IMR-90 (cell line): ENCODE measurements at regions of chr3 and their contacts with region 1.

Region 1: GRCh38 chr3:195204360-195205163 is 66.4 kb downstream of the XXYLT1 start:
- DNase-seq: no peak
- ATAC-seq: peak; percentile 4; the same call in 1 of the 2 replicates
- H3K4me3 ChIP-seq: no peak overlapping the region
- H3K27ac ChIP-seq: peak overlapping the region; percentile 94
- H3K4me1 ChIP-seq: peaks cover 27% of the 10 kb centered on the region
- H3K27me3 ChIP-seq: no peaks in the 10 kb centered on the region
- CTCF ChIP-seq: no peak
- POLR2A ChIP-seq: no peak
- RAD21 ChIP-seq: no peak

Region 2: GRCh38 chr3:194497821-194498598 is 706.6 kb before region 1 on chr3:
- CTCF ChIA-PET with region 1: no interaction called
- POLR2A ChIA-PET with region 1: no interaction called
- dilution Hi-C with region 1: no loop called
- in situ Hi-C with region 1: no loop called
- intact Hi-C with region 1: no loop called
- DNase-seq: no peak
- ATAC-seq: no peak
- H3K4me3 ChIP-seq: no peak overlapping the region
- H3K27ac ChIP-seq: peak overlapping the region; percentile 23; the same call in 1 of the 2 replicates
- H3K4me1 ChIP-seq: peaks cover 18% of the 10 kb centered on the region
- H3K27me3 ChIP-seq: no peaks in the 10 kb centered on the region
- CTCF ChIP-seq: no peak
- POLR2A ChIP-seq: no peak
- RAD21 ChIP-seq: no peak

Region 3: DNA sequence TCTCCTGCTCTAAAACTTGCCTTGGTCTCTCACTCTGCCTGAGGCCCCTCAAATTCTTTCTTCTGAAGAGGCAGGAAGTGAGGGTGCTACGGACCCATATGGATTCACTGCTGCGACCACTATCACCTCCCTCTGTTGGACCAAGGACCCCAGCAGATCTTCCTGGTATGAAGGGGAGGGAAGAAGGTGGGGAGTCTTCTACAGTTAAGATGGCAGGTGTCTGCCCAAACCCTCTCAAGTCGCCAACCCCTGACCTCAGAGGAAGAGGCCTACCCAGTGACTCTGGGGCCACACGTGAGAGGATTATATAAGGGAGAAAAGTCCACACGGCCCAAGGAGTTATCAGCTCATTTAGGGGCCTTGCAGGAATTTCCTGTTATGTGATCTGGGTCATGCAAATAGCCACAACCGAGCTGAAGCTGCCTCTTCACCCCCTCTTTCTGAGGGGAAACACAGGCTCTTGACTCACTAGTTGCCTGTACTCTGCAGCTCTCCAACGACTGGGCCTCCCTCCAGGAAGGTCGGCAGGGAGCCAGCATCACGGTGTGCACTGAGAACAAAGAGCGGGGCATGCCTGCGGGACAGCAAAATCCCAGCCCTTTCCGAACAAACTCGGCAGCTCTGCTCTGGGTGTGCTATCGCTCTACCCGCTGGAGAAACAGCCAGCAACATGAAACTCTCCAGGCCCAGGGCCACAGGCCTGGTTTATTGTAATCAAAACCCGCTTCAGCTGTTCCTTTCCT is 49.6 kb before region 1 on chr3:
- CTCF ChIA-PET with region 1: no interaction called
- POLR2A ChIA-PET with region 1: no interaction called
- dilution Hi-C with region 1: no loop called
- in situ Hi-C with region 1: no loop called
- intact Hi-C with region 1: loop called (anchors 2 kb)
- DNase-seq: peak; percentile 97
- ATAC-seq: peak; percentile 73
- H3K4me3 ChIP-seq: no peak overlapping the region
- H3K27ac ChIP-seq: peak overlapping the region; percentile 95
- H3K4me1 ChIP-seq: peaks cover 46% of the 10 kb centered on the region
- H3K27me3 ChIP-seq: no peaks in the 10 kb centered on the region
- CTCF ChIP-seq: no peak
- POLR2A ChIP-seq: no peak
- RAD21 ChIP-seq: no peak